ENCODE measurements at regions of chr12 and their contacts with region 1.

Region 1: GRCh38 chr12:64610149-64610678 is at the start of gene RASSF3:
- DNase-seq: no peak
- H3K4me3 ChIP-seq: peak within 1 kb of the TSS; percentile 90
- H3K27ac ChIP-seq: peak within 1 kb of the TSS; percentile 82
- H3K27me3 ChIP-seq: no peaks in the 10 kb centered on the region
- CTCF ChIP-seq: no peak
- polyA plus RNA-seq, gene RASSF3: 46.7 and 49.8 TPM in 2 replicates

Region 2: GRCh38 chr12:64560396-64561304 is 49.6 kb before region 1 on chr12:
- CTCF ChIA-PET with region 1: no interaction called
- POLR2A ChIA-PET with region 1: interaction called, 15 read pairs
- DNase-seq: peak; percentile 99
- H3K4me3 ChIP-seq: peak overlapping the region; percentile 27
- H3K27ac ChIP-seq: peak overlapping the region; percentile 89
- H3K27me3 ChIP-seq: no peaks in the 10 kb centered on the region
- CTCF ChIP-seq: no peak

Region 3: GRCh38 chr12:64635356-64635998 is 25.3 kb after region 1 on chr12:
- CTCF ChIA-PET with region 1: no interaction called
- POLR2A ChIA-PET with region 1: no interaction called
- DNase-seq: no peak
- H3K4me3 ChIP-seq: no peak overlapping the region
- H3K27ac ChIP-seq: no peak overlapping the region
- H3K27me3 ChIP-seq: no peaks in the 10 kb centered on the region
- CTCF ChIP-seq: no peak